ENCODE measurements at regions of chr1 and their contacts with region 1.

Region 1: GRCh38 chr1:62436466-62437256 is at the start of gene USP1:
- DNase-seq: peak; percentile 98 to 99
- H3K4me3 ChIP-seq: peak within 1 kb of the TSS; percentile 91 to 95
- H3K27ac ChIP-seq: peak within 1 kb of the TSS; percentile 95 to 97
- H3K4me1 ChIP-seq: peaks cover 0 to 23% of the 10 kb centered on the region in 2 donors
- H3K27me3 ChIP-seq: no peaks in the 10 kb centered on the region
- CTCF ChIP-seq: no peak
- total RNA-seq, gene USP1: 19.4 TPM

Region 2: GRCh38 chr1:62407405-62408009 is 29.2 kb before region 1 on chr1:
- intact Hi-C with region 1: no loop called
- DNase-seq: no peak
- H3K4me3 ChIP-seq: no peak overlapping the region
- H3K27ac ChIP-seq: no peak overlapping the region
- H3K4me1 ChIP-seq: no peaks in the 10 kb centered on the region
- H3K27me3 ChIP-seq: no peaks in the 10 kb centered on the region
- CTCF ChIP-seq: peak; percentile 57 to 80 (median 67)

Region 3: DNA sequence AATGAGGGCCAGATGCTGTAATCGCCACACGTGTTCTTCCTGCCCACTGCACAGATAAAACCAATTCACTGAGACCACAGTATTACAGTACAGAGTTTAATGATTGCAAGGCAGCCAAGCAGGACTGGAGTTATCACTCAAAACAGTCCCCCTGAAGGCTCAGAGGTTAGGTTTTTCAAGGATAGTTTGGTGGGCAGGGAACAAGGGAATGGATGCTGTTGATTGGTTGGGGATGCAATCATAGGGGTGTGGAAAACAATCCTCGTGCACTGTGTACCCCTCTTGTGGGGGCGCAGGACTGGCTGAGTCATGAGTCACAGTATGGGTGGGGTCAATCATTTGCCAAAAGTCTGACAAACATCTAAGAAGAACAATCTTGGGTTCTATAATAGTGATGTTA is 12.2 kb before region 1 on chr1:
- intact Hi-C with region 1: no loop called
- DNase-seq: no peak
- H3K4me3 ChIP-seq: no peak overlapping the region
- H3K27ac ChIP-seq: no peak overlapping the region
- H3K4me1 ChIP-seq: no peaks in the 10 kb centered on the region
- H3K27me3 ChIP-seq: no peaks in the 10 kb centered on the region
- CTCF ChIP-seq: no peak

Region 4: DNA sequence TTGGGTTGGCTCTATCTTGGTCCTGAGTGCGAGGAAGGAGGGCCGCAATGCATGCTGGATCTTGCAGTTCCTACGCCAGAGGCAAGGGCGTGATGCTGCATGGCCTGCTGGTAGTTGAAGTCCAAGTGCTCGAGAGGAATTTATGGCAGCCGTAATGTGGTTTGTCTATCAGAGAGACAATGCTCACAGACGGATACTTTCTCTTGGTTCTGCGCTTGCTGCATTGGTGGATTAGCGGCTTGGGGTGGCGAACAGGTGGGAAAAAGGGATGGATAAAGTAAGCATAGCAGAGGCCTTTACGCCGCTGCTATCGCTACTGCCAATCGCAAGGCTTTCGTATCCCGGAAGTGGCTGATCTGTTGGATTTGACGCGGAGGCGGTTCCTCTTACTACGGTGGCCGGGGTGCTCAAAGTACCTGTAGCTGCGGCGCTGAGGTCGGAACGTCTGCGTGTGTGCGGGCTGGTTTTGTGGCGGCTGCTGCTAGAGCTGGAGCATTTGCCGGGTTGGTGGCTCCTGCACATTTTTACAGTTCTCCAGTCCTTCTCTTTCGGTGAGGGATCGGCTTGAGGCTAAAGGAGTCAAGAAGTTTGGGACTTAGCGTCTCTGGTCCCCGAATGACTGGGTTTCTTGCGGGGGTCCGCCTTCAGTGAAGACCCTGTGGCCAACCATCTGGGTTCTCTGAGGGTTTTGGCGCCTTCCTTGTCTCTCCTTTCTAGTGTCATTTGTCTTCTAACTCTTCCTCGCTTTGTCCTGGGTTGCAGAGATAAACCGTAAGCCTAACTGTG is 347.3 kb after region 1 on chr1 and contains the start of gene ATG4C:
- intact Hi-C with region 1: loop called (anchors 1 kb)
- DNase-seq: peak; percentile 90 to 98
- H3K4me3 ChIP-seq: peak within 1 kb of the TSS; percentile 81 to 93
- H3K27ac ChIP-seq: peak within 1 kb of the TSS; percentile 87 to 90
- H3K4me1 ChIP-seq: peaks cover 0 to 9% of the 10 kb centered on the region in 2 donors
- H3K27me3 ChIP-seq: no peaks in the 10 kb centered on the region
- CTCF ChIP-seq: no peak
- total RNA-seq, gene ATG4C: 9.7 TPM

Region 5: DNA sequence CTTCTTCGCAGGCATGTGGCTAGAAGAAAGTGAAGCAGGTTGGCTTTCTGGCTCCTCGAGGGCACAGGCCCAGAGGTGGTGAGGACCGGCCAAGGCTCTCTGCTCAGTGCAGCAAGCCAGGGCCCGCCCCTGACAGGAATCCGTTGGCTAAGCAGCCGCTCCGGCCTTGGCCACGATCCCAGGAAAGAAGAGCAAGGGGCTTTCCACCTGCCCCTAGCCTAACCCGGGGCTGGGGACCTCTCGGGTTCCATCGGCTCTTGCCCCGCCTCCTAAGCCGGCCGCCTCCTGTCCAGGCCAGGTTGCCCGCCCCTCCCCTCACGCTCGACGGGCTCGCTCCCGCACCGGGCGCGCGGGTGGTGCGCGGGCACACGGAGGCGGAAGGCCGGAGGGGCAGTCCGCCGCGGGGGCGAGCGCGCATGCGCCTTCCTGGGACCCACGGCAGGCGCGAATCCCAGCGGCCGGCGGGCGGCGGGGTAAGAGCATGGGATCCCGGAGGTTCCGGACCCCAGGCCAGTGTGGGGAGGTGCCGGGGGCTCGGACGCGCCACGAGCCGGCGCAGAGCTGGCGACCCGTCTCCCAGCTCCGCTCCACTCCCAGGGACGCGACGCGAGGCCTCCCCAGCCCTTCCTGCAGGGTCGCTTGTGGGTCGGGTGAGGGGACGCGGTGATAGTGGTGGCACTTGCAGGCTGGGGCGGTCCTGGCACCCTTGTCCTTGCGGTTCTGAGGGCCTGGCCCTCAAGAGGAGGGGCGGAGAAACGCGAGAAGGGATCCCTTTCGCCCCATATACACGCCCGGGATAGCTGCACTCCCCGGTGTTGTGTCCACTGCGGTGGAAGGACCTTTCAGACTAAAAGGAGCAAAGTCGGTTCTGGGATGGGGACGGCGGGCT is 930.8 kb after region 1 on chr1 and contains the start of gene ALG6:
- intact Hi-C with region 1: loop called (anchors 10 kb)
- DNase-seq: peak; percentile 78 to 96
- H3K4me3 ChIP-seq: peak within 1 kb of the TSS; percentile 72 to 80
- H3K27ac ChIP-seq: peak within 1 kb of the TSS; percentile 61 to 75
- H3K4me1 ChIP-seq: peaks cover 0 to 2% of the 10 kb centered on the region in 2 donors
- H3K27me3 ChIP-seq: no peaks in the 10 kb centered on the region
- CTCF ChIP-seq: no peak
- total RNA-seq, gene ALG6: 5.7 TPM